Right cardiac atrium (tissue), 5 donors: ENCODE measurements at regions of chr7 and their contacts with region 1.

Region 1: GRCh38 chr7:106659963-106660861 is 746 bp downstream of the CCDC71L start:
- DNase-seq: peak; percentile 80 to 92 (median 91)
- ATAC-seq: peak; percentile 71
- H3K4me3 ChIP-seq: peak overlapping the region; percentile 75
- H3K27ac ChIP-seq: peak overlapping the region; percentile 88
- H3K4me1 ChIP-seq: no peaks in the 10 kb centered on the region
- H3K27me3 ChIP-seq: no peaks in the 10 kb centered on the region

Region 2: DNA sequence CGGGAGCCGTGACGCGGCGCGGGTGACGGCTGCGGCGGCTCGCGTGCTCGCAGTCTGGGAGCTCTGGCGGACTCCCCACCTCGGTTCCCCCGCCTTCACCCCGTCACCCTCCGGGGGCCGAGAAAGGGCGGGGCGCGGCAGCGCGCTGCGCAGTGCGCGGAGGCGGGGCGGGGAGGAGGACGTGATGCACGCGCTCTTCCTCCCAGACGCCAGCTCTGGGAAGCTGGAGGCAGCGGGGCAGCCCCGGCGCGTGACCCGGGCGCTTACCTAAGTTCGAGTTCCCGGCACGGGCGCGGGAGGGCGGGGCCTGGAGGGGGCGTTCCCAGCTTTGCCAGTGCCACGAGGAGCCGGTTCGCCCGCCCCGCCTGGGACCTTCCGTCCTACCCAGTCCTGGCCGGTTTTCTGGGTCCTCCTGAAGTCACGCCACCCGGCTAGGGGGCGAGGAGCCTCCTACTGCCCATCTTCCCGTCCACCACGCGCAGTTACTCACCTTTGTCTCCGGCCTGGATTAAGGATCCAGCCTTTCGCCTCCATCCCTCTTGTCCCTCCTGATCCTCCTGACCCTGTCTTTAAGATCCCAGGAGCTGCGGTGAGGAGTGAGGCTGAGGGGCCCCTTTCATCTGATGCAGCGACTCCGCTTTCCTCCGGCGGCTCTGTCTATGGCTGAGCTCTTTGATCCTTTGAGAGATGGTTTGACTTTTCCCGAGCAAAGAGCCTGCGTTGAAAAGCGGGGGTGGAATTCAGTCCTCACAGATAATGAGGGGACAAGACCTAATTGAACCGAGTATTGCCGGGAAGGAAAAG is 375.0 kb before region 1 on chr7:
- intact Hi-C with region 1: loop called in 1 of 4 experiments (anchors 5 kb)
- DNase-seq: peak; percentile 99 to 100 (median 99)
- ATAC-seq: peak; percentile 97 to 98
- H3K4me3 ChIP-seq: peak overlapping the region; percentile 88
- H3K27ac ChIP-seq: peak overlapping the region; percentile 96
- H3K4me1 ChIP-seq: no peaks in the 10 kb centered on the region
- H3K27me3 ChIP-seq: no peaks in the 10 kb centered on the region

Region 3: DNA sequence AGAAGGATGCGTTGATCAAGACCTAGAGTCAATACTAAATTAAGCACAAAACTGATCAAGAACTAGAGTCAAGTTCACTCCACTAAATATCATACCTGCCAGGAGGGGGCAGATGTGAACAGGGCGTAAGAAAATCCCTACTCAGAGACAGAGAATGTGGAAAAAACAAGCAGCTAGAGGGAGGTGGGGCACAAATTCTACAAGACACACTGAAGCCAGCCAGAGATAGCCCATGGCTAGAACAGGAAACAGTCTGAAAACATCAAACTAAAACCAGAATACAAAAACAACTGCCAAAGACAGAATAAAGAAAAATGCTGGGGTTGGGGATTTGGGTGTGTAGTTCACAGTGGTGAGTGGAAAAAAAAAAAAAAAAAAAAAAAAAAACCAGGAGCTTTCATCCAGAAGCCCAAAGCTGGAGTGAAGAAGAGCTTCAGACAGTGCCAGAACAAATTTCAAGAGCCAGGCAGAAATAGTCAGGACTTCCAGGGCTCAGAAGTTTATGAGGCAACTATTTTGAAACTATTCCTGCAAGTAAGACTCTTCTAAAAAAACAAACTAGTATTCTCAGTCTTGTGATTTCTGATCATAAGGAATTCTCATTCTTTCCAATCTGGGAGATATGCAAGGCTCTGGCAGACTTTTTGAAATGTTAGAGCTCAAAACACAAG is 117.5 kb before region 1 on chr7:
- intact Hi-C with region 1: loop called in 1 of 4 experiments (anchors 10 kb)
- DNase-seq: peak in 2 of 3 donors; percentile 46 to 53
- ATAC-seq: peak; percentile 94 to 97
- H3K4me3 ChIP-seq: no peak overlapping the region
- H3K27ac ChIP-seq: no peak overlapping the region
- H3K4me1 ChIP-seq: no peaks in the 10 kb centered on the region
- H3K27me3 ChIP-seq: no peaks in the 10 kb centered on the region

Region 4: GRCh38 chr7:106731187-106731586 is 71.0 kb after region 1 on chr7:
- intact Hi-C with region 1: loop called in 1 of 4 experiments (anchors 5 kb)
- DNase-seq: no peak
- ATAC-seq: peak; percentile 11 to 36
- H3K4me3 ChIP-seq: no peak overlapping the region
- H3K27ac ChIP-seq: no peak overlapping the region
- H3K4me1 ChIP-seq: peaks cover 2% of the 10 kb centered on the region
- H3K27me3 ChIP-seq: no peaks in the 10 kb centered on the region